ENCODE measurements at regions of chr6 and their contacts with region 1.

Region 1: DNA sequence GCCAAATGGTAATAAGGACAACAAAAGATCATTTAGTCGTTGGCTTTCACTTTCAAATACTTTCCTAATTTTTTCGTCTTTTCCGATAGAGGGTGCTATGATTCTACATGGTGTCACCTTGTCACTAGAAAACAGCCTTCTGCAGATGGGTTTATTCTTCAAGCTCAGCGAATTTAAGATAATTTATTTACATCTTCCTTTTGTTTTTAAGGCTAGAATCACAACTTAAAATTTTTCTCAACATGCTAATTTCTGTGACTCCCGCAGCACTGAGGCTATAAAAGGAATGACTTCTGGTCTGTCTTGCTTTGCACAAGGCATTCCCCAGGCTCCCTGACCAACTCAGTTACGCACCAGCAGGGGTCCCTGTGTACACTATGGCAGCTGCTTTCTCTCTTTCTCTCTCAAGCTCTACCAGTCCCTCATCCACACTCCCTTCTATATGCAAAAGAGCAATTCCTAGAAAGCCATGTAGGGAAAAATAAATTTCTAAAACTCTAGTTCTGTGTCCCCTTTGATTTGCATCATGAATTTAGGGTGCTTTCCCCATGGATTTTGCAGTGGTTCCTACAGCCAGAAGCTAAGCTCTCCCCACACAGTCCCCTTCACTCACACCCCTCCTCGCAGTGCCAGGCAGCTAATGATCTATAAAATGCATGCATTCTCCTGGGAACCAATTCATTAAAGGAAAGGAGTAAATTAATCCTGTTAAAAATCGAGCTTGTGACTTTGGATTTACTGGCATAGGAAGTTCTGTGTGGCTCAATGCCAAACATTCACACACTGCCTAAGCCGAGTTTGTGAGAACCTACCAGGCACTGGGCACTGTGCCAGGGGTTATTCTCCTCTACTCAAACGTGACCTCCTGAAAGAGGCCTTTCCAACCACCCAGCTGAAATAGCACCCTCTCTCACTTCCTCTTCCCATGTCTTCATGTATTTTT is 74.5 kb downstream of the DCDC2 start:
- DNase-seq: peak; percentile 43
- H3K4me3 ChIP-seq: no peak overlapping the region
- H3K27ac ChIP-seq: no peak overlapping the region
- H3K4me1 ChIP-seq: no peaks in the 10 kb centered on the region
- H3K27me3 ChIP-seq: peaks cover 4% of the 10 kb centered on the region
- CTCF ChIP-seq: peak; percentile 20 to 71 (median 56)
- POLR2A ChIP-seq: no peak

Region 2: GRCh38 chr6:24385536-24386269 is 102.4 kb after region 1 on chr6:
- intact Hi-C with region 1: loop called (anchors 5 kb)
- DNase-seq: no peak
- H3K4me3 ChIP-seq: no peak overlapping the region
- H3K27ac ChIP-seq: no peak overlapping the region
- H3K4me1 ChIP-seq: no peaks in the 10 kb centered on the region
- H3K27me3 ChIP-seq: no peaks in the 10 kb centered on the region
- CTCF ChIP-seq: no peak
- POLR2A ChIP-seq: no peak